WTC11 (cell line): ENCODE measurements at regions of chr4 and their contacts with region 1.

Region 1: GRCh38 chr4:24352112-24352511 is 232.2 kb downstream of the DHX15 start:
- DNase-seq: no peak
- ATAC-seq: peak; percentile 77
- H3K4me3 Mint-ChIP-seq: no peak overlapping the region
- H3K27ac Mint-ChIP-seq: no peak overlapping the region
- H3K4me1 Mint-ChIP-seq: peaks cover 26% of the 10 kb centered on the region
- H3K27me3 Mint-ChIP-seq: peaks cover 79% of the 10 kb centered on the region
- CTCF ChIP-seq: no peak

Region 2: GRCh38 chr4:24321151-24321550 is 31.0 kb before region 1 on chr4:
- CTCF ChIA-PET with region 1: interaction called, 12 read pairs
- POLR2A ChIA-PET with region 1: no interaction called
- DNase-seq: no peak
- ATAC-seq: no peak
- H3K4me3 Mint-ChIP-seq: peak overlapping the region; percentile 99
- H3K27ac Mint-ChIP-seq: peak overlapping the region; percentile 97
- H3K4me1 Mint-ChIP-seq: peaks cover 79% of the 10 kb centered on the region
- H3K27me3 Mint-ChIP-seq: no peaks in the 10 kb centered on the region; the same call in 1 of the 2 replicates
- CTCF ChIP-seq: no peak

Region 3: DNA sequence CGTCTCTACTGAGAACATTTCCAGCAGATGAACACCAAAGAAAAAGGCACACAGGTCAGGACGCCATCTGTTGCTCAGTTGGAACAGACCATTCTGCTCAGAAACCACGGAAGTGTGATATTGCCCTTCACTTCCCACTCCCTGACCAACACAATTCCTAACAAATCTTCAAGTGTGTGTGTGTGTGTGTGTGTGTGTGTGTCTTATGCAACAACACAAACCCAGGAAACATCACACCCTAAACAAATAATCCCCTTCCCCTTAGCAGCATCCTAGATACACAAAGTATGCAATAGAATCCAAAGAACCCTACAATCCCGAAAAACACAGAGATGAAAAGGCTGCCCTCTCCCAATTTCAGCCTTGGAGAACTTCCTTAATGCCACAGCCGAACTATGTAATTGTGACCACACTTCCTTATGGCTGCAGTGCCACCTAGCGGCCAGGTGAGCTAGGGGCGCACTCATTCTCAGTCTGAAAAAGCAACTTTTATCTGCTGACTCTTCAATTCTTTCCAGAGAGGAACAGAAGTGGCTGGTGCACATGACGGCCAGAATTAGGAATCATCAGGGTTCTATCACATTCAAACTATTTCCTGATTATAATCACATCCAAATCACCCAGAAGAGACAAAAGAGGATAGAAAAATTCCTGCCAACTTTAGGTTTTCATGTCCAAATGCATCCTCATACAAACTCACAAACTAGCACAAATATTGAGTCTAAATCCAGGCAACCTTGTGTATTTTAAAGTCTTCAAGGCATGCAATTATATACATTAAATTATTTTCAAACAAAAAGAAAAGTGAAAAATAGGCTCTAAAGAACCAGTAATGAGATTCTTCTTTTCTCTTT is 67.3 kb after region 1 on chr4:
- CTCF ChIA-PET with region 1: interaction called, 21 read pairs
- POLR2A ChIA-PET with region 1: no interaction called
- DNase-seq: peak; percentile 86
- ATAC-seq: peak; percentile 97
- H3K4me3 Mint-ChIP-seq: no peak overlapping the region
- H3K27ac Mint-ChIP-seq: no peak overlapping the region
- H3K4me1 Mint-ChIP-seq: peaks cover 16% of the 10 kb centered on the region
- H3K27me3 Mint-ChIP-seq: peaks cover 12% of the 10 kb centered on the region
- CTCF ChIP-seq: peak; percentile 90